Activated naive CD4-positive, alpha-beta T cell treated with anti-CD3 and anti-CD28 coated beads for 36 hours (primary cell): ENCODE measurements at regions of chr1 and their contacts with region 1.

Region 1: DNA sequence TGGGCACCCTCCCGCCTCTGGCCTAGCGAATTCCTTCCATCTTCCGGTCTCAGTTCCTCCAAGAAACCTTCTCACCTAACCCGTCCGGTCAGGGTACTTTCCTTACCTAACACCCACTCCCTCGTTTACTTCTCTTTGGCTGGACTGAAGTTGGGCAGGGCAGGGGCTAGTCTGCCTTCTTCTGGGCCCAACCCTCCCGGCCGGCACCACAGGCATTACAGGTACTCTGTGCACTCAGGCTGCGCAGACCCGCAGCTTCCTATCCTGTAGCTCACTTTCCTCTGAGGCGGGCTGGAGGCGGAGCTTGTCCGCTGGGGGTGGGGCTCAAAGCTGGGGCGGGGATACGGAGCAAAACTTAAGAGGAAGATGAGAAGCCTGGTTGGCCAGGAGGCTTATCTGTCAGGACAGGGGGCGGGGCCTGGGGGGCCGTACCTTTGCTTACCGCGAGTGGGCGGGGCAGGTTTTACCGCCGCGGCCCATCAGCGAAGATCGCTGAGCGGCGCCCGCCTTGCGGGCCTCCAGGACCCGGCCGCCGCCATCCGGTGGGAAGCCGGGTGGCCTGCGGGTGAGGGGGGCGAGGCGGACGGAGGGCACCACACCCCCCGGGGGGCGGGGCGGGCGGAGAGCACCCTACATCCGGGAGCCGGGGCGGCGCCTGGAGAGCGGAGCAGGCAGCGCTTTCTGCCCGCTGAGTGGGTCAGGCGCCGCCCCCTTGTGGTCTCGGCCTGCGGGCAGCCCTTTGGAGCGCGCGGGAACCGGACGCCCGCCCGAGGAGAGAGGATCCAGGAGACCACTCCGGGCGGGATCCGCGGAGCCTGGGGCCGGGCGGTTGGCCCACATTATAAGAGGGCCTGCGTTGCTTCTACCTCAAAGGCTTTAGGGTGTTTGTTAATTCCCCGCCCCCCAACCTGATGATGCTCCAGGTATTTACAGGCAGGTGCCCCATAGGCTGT is 31.9 kb downstream of the ZNF648 start:
- DNase-seq: peak; percentile 99
- H3K4me3 Mint-ChIP-seq: peak overlapping the region; percentile 95
- H3K27ac Mint-ChIP-seq: peak overlapping the region; percentile 95
- H3K4me1 Mint-ChIP-seq: peaks cover 9% of the 10 kb centered on the region
- H3K27me3 Mint-ChIP-seq: no peaks in the 10 kb centered on the region

Region 2: GRCh38 chr1:181647314-181648195 is 382.1 kb before region 1 on chr1:
- CTCF ChIA-PET with region 1: no interaction called
- intact Hi-C with region 1: no loop called
- DNase-seq: no peak
- H3K4me3 Mint-ChIP-seq: no peak overlapping the region
- H3K27ac Mint-ChIP-seq: no peak overlapping the region
- H3K4me1 Mint-ChIP-seq: no peaks in the 10 kb centered on the region
- H3K27me3 Mint-ChIP-seq: peaks cover 30% of the 10 kb centered on the region

Region 3: GRCh38 chr1:182789138-182790076 is 759.8 kb after region 1 on chr1 and contains the start of gene NPL:
- CTCF ChIA-PET with region 1: no interaction called
- intact Hi-C with region 1: loop called (anchors 5 kb)
- DNase-seq: peak; percentile 85
- H3K4me3 Mint-ChIP-seq: peak within 1 kb of the TSS; percentile 81
- H3K27ac Mint-ChIP-seq: peak within 1 kb of the TSS; percentile 22
- H3K4me1 Mint-ChIP-seq: peaks cover 13% of the 10 kb centered on the region
- H3K27me3 Mint-ChIP-seq: no peaks in the 10 kb centered on the region
- total RNA-seq, gene NPL: 4.6 to 5.9 TPM